Activated T-helper 2 cell treated with anti-CD3 and anti-CD28 coated beads, Interferon-gamma antibody, Interleukin-2, Interleukin-4, amounts not matched to agents 10 μg/mL and 5 μg/mL and 100 μg/mL, durations not matched to agents 14 hours and 24 hours and 36 hours (primary cell): ENCODE measurements at regions of chr2 and their contacts with region 1.

Region 1: DNA sequence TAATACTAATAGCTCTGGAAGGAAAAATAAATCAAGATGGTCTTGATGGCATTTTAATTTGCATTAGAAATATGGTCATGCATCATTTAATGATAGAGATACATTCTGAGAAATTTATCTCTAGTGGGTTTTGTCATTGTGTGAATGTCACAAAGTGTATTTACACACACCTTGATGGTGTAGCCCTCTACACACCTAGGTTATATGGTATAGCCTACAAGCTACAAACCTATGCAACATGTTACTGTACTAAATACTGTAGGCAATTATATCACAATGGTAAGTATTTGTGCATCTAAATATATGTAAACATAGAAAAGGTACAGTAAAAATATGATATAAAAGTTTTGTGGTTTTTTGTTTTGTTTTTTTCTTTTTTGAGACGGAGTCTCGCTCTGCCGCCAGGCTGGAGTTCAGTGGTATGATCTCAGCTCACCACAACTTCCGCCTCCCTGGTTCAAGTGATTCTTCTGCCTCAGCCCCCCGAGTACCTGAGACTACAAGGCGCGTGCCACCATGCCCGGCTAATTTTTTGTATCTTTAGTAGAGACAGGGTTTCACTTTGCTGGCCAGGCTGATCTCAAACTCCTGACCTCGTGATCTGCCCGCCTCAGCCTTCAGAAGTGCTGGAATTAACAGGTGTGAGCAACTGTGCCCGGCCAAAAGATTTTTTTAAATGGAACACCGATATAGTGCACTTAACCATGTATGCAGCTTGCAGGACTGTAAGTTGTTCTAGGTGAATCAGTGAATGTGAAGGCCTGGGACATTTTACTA is 83.7 kb upstream of the UBXN4 start:
- DNase-seq: peak; percentile 44
- H3K4me3 Mint-ChIP-seq: peak overlapping the region; percentile 54
- H3K27ac Mint-ChIP-seq: peak overlapping the region; percentile 77
- H3K4me1 Mint-ChIP-seq: peaks cover 24% of the 10 kb centered on the region
- H3K27me3 Mint-ChIP-seq: no peaks in the 10 kb centered on the region

Region 2: GRCh38 chr2:135546436-135546835 is 111.6 kb before region 1 on chr2:
- intact Hi-C with region 1: loop called (anchors 5 kb)
- DNase-seq: no peak
- H3K4me3 Mint-ChIP-seq: no peak overlapping the region
- H3K27ac Mint-ChIP-seq: no peak overlapping the region
- H3K4me1 Mint-ChIP-seq: peaks cover 22% of the 10 kb centered on the region
- H3K27me3 Mint-ChIP-seq: peaks cover 2% of the 10 kb centered on the region

Region 3: GRCh38 chr2:135637456-135638087 is 20.4 kb before region 1 on chr2:
- intact Hi-C with region 1: no loop called
- DNase-seq: no peak
- H3K4me3 Mint-ChIP-seq: no peak overlapping the region
- H3K27ac Mint-ChIP-seq: peak overlapping the region; percentile 36
- H3K4me1 Mint-ChIP-seq: peaks cover 12% of the 10 kb centered on the region
- H3K27me3 Mint-ChIP-seq: no peaks in the 10 kb centered on the region